Thyroid gland (tissue), 4 donors: ENCODE measurements at regions of chr10 and their contacts with region 1.

Region 1: GRCh38 chr10:27225642-27226257 is 14.8 kb downstream of the ACBD5 start:
- DNase-seq: no peak
- H3K4me3 ChIP-seq: no peak overlapping the region
- H3K27ac ChIP-seq: no peak overlapping the region
- H3K4me1 ChIP-seq: no peaks in the 10 kb centered on the region
- H3K27me3 ChIP-seq: no peaks in the 10 kb centered on the region
- CTCF ChIP-seq: no peak
- POLR2A ChIP-seq: no peak

Region 2: DNA sequence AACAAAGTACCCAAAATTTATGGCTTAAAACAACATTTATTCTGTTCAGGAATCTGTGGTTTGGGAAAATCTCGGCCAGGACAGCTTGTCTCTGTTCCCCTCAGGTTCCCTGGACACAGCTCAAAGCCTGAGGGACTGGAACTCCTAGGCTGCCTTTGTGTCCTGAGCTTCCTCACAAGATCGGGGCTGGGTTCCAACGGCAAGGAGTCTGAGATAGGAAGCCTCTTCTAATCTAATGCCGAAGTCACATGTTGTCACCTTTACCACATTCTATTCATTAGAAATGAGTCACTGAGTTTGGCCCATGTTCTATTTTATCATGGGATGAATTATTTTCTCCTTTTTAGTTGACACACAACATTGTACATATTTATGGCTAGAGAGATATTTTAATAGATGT is 205.9 kb before region 1 on chr10:
- intact Hi-C with region 1: no loop called
- DNase-seq: no peak
- H3K4me3 ChIP-seq: no peak overlapping the region
- H3K27ac ChIP-seq: no peak overlapping the region
- H3K4me1 ChIP-seq: no peaks in the 10 kb centered on the region
- H3K27me3 ChIP-seq: no peaks in the 10 kb centered on the region
- CTCF ChIP-seq: no peak
- POLR2A ChIP-seq: no peak

Region 3: DNA sequence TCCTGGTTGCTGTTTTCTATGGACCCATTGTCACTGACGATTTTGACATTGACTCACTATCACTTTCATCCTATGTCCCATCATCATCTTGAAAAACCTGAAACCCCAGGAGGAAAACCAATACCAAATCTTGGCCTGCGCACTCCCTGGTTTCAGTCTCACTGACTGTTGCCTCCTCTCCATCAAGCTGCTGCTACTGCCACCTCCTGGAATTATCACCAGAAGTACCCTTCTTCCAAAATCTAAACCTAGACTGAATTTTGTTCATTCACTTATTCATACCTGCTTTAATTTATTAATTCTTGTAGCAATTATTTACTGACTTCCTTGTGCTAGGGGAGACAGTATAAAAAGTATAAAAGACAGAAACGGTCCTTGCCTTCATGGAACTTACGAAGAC is 59.4 kb after region 1 on chr10:
- intact Hi-C with region 1: loop called (anchors 10 kb)
- DNase-seq: peak; percentile 38 to 53
- H3K4me3 ChIP-seq: no peak overlapping the region
- H3K27ac ChIP-seq: no peak overlapping the region
- H3K4me1 ChIP-seq: peaks cover 4 to 8% of the 10 kb centered on the region in 2 donors
- H3K27me3 ChIP-seq: no peaks in the 10 kb centered on the region
- CTCF ChIP-seq: peak in 5 of 6 experiments; percentile 29 to 52 (median 47)
- POLR2A ChIP-seq: no peak

Region 4: GRCh38 chr10:27360581-27361172 is 134.9 kb after region 1 on chr10:
- intact Hi-C with region 1: loop called (anchors 5 kb)
- DNase-seq: peak; percentile 82 to 83
- H3K4me3 ChIP-seq: no peak overlapping the region
- H3K27ac ChIP-seq: no peak overlapping the region
- H3K4me1 ChIP-seq: no peaks in the 10 kb centered on the region
- H3K27me3 ChIP-seq: no peaks in the 10 kb centered on the region
- CTCF ChIP-seq: peak; percentile 25 to 92 (median 77)
- POLR2A ChIP-seq: no peak

Region 5: GRCh38 chr10:27457966-27458365 is 232.2 kb after region 1 on chr10:
- intact Hi-C with region 1: no loop called
- DNase-seq: no peak
- H3K4me3 ChIP-seq: no peak overlapping the region
- H3K27ac ChIP-seq: no peak overlapping the region
- H3K4me1 ChIP-seq: no peaks in the 10 kb centered on the region
- H3K27me3 ChIP-seq: no peaks in the 10 kb centered on the region
- CTCF ChIP-seq: no peak
- POLR2A ChIP-seq: no peak